AG04449 (cell line): ENCODE measurements at regions of chr16 and their contacts with region 1.

Region 1: DNA sequence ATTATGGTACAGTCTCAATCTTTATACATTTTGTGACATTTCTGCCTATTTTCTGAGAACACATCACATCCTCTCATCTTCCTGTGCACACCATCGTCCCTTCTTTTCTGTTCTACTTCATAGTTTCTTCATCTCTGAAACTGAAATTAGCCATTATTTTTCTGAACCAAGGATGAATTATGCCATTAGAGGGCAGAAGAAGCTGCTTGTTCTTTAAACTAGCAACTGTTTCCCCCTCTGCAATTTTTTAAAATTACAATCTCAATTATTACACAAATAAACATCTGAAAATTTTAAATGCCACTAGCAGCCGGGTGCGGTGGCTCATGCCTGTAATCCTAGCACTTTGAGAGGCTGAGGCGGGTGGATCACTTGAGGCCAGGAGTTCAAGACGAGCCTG is 41.3 kb downstream of the RBBP6 start:
- DNase-seq: peak; percentile 14
- H3K4me3 ChIP-seq: no peak overlapping the region
- CTCF ChIP-seq: peak; percentile 28

Region 2: DNA sequence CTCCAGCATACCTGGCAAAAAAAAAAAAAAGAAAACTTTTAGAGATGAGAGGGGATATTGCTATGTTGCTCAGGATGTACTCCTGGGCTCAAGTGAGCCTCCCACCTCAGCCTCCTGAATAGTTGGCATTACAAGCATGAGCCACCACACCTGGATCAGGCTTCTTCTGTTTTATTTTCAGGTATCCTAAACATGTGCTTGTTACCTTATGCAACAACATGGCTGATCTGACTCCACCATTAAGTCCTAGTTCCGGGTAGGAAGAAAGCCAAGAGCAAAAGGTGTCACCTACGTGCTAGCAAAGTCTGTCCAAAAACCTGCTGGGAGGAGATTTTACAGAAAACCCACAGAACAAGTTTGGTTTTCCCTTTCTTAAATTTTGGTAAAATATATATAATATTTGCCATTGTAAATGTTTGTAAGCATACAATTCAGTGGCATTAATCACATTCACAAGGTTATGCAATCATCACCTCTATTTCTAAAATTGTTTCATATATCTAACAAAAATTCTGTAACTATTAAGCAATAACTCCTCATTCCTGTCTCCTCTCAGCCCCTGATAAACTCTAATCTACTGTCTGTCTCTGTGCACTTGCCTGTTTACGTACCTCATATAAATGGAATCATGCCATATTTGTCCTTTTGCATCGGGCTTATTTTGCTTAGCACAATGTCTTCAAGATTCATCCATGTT is 333.6 kb before region 1 on chr16:
- CTCF ChIA-PET with region 1: no interaction called
- POLR2A ChIA-PET with region 1: no interaction called
- DNase-seq: no peak
- H3K4me3 ChIP-seq: no peak overlapping the region
- CTCF ChIP-seq: no peak

Region 3: GRCh38 chr16:24670623-24671454 is 90.2 kb after region 1 on chr16:
- CTCF ChIA-PET with region 1: interaction called, 11 read pairs
- POLR2A ChIA-PET with region 1: no interaction called
- DNase-seq: no peak
- H3K4me3 ChIP-seq: peak overlapping the region; percentile 35
- CTCF ChIP-seq: no peak

Region 4: GRCh38 chr16:24734389-24734788 is 153.7 kb after region 1 on chr16:
- CTCF ChIA-PET with region 1: interaction called, 11 read pairs
- POLR2A ChIA-PET with region 1: no interaction called
- DNase-seq: peak; percentile 44
- H3K4me3 ChIP-seq: no peak overlapping the region
- CTCF ChIP-seq: no peak

Region 5: GRCh38 chr16:24800586-24800985 is 219.9 kb after region 1 on chr16:
- CTCF ChIA-PET with region 1: interaction called, 25 read pairs
- POLR2A ChIA-PET with region 1: no interaction called
- DNase-seq: no peak
- H3K4me3 ChIP-seq: no peak overlapping the region
- CTCF ChIP-seq: no peak

Region 6: GRCh38 chr16:24834459-24835335 is 254.0 kb after region 1 on chr16:
- CTCF ChIA-PET with region 1: interaction called, 10 read pairs
- POLR2A ChIA-PET with region 1: no interaction called
- DNase-seq: no peak
- H3K4me3 ChIP-seq: no peak overlapping the region
- CTCF ChIP-seq: peak; percentile 72

Region 7: DNA sequence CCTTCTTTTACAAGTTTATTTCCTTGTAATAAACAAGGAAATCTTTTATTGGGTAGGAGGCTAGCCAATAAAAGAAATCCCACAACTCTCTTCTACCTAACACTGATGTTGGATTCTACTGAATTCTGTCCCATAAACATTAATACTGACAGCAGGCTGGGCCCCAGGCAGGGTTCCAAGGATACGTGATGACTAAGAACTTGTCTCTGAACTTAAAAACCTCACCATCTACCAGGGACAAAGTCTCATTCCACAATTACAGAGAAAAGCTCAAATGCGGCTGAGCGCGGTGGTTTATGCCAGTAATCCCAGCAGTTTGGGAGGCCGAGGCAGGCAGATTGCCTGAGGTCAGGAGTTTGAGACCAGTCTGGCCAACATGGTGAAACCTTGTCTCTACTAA is 369.6 kb after region 1 on chr16:
- CTCF ChIA-PET with region 1: no interaction called
- POLR2A ChIA-PET with region 1: no interaction called
- DNase-seq: peak; percentile 19
- H3K4me3 ChIP-seq: no peak overlapping the region
- CTCF ChIP-seq: no peak